ENCODE measurements at regions of chr3 and their contacts with region 1.

Region 1: GRCh38 chr3:187738331-187739093 is 6.8 kb downstream of the BCL6 start:
- DNase-seq: peak; percentile 84
- H3K4me3 ChIP-seq: peak overlapping the region; percentile 32 to 65 (median 63)
- H3K27ac ChIP-seq: peak overlapping the region; percentile 91
- H3K4me1 ChIP-seq: peaks cover 63% of the 10 kb centered on the region
- H3K27me3 ChIP-seq: no peaks in the 10 kb centered on the region
- CTCF ChIP-seq: peak; percentile 67 to 80

Region 2: DNA sequence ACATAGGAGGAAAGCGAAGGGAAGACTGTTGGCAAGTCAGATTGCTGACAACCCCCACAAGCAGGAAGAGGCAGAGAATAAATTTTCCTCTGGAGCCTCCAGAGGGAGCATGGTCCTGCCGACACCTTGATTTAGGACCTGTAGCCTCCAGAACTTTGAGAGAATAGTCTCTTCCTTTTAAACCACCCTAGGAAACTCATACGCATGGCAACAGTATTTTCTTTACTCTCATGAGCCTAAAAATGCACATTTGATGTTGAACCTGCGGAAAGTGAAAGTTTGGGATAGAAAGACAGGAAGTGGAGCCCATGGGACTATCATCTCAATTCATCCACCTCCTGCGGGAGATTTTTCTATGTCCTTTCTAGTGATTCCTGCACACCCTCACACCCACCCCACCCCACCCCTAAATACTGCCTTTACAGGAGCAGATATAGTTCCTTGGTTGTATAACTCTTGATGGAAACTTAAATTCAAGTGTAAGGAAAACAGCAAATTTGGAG is 298.8 kb after region 1 on chr3:
- CTCF ChIA-PET with region 1: no interaction called
- dilution Hi-C with region 1: no loop called
- in situ Hi-C with region 1: loop called in 1 of 2 experiments (anchors 10 kb)
- intact Hi-C with region 1: loop called (anchors 1 kb)
- DNase-seq: peak; percentile 48
- H3K4me3 ChIP-seq: no peak overlapping the region
- H3K27ac ChIP-seq: no peak overlapping the region
- H3K4me1 ChIP-seq: peaks cover 11% of the 10 kb centered on the region
- H3K27me3 ChIP-seq: no peaks in the 10 kb centered on the region
- CTCF ChIP-seq: peak; percentile 40 to 58

Region 3: GRCh38 chr3:188389711-188390342 is 651.3 kb after region 1 on chr3:
- CTCF ChIA-PET with region 1: no interaction called
- dilution Hi-C with region 1: no loop called
- in situ Hi-C with region 1: loop called in 1 of 2 experiments (anchors 25 kb)
- intact Hi-C with region 1: loop called (anchors 2 kb)
- DNase-seq: peak; percentile 74
- H3K4me3 ChIP-seq: peak overlapping the region in 2 of 3 experiments; percentile 6 to 17
- H3K27ac ChIP-seq: peak overlapping the region; percentile 95
- H3K4me1 ChIP-seq: peaks cover 37% of the 10 kb centered on the region
- H3K27me3 ChIP-seq: no peaks in the 10 kb centered on the region
- CTCF ChIP-seq: no peak

Region 4: GRCh38 chr3:188594139-188594538 is 855.6 kb after region 1 on chr3:
- CTCF ChIA-PET with region 1: no interaction called
- dilution Hi-C with region 1: no loop called
- in situ Hi-C with region 1: loop called in 1 of 2 experiments (anchors 25 kb)
- intact Hi-C with region 1: loop called (anchors 5 kb)
- DNase-seq: peak; percentile 72
- H3K4me3 ChIP-seq: no peak overlapping the region
- H3K27ac ChIP-seq: peak overlapping the region; percentile 67
- H3K4me1 ChIP-seq: peaks cover 37% of the 10 kb centered on the region
- H3K27me3 ChIP-seq: no peaks in the 10 kb centered on the region
- CTCF ChIP-seq: no peak

Region 5: GRCh38 chr3:188749010-188749617 is 1010.6 kb after region 1 on chr3:
- CTCF ChIA-PET with region 1: no interaction called
- dilution Hi-C with region 1: no loop called
- in situ Hi-C with region 1: loop called (anchors 10 kb)
- intact Hi-C with region 1: loop called (anchors 1 kb)
- DNase-seq: no peak
- H3K4me3 ChIP-seq: no peak overlapping the region
- H3K27ac ChIP-seq: no peak overlapping the region
- H3K4me1 ChIP-seq: no peaks in the 10 kb centered on the region
- H3K27me3 ChIP-seq: no peaks in the 10 kb centered on the region
- CTCF ChIP-seq: peak; percentile 70 to 83

Region 6: DNA sequence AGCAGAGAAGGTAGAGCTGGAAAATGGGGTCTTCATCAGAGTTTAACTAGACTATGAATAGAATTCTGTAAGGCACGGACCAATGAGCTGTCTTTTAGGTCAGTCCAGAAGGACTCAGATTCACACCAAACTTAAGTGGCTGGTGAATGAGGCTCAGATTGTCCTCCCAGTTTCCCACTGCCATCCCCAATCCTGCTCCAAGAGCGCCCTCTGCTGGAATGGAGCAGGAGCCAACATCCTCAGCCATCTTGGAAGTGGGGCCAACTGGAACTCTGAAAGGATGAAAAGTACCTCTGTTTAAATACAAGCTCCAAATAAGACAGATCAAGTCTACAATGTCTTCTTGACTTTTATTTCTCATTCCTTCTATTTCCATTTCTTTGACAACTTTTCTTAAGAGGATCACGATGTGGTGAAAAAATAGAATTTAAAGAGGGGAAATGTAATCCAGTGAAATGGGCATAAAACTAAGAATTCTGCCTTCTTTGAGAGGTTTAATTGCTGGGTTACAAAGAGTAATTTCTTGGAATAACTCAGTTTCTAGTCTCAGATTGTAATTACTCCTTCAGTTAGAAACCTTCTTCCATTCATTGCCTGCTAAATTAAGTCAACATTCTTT is 1216.2 kb after region 1 on chr3:
- CTCF ChIA-PET with region 1: interaction called, 24 read pairs
- dilution Hi-C with region 1: loop called (anchors 5 kb)
- in situ Hi-C with region 1: loop called (anchors 5 kb)
- intact Hi-C with region 1: loop called (anchors 1 kb)
- DNase-seq: peak; percentile 72
- H3K4me3 ChIP-seq: no peak overlapping the region
- H3K27ac ChIP-seq: no peak overlapping the region
- H3K4me1 ChIP-seq: peaks cover 11% of the 10 kb centered on the region
- H3K27me3 ChIP-seq: no peaks in the 10 kb centered on the region
- CTCF ChIP-seq: peak; percentile 93 to 98

Region 7: DNA sequence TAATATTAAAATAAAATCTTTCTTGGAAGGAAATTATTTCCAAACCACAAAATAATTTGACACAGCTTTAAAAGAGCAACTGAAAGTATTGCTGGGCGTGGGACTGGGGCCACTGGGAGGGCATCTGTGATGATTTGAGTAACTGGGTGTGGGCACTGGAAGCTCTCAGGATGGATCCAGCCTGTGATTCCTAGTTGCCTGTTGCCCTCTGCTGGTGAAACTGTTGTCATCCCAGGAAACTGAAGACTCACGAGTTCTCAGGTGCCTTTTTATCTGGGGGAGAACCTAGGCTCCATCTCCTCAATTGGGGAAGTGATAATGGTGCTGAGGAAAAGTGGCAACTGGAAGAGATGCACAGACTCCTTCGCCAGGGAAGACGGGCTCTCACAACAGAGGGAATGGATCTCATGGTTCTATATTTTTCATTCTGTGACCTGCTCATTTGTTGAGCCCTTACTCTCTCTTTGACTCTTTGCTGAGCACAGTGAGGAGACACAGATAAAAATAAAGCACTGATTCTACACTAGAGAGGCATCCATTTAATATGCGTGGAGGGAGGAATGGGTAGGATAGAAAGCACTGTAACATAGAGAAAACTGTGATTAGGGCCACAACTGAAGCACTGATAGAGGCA is 1494.8 kb after region 1 on chr3:
- CTCF ChIA-PET with region 1: no interaction called
- dilution Hi-C with region 1: no loop called
- in situ Hi-C with region 1: loop called in 1 of 2 experiments (anchors 10 kb)
- intact Hi-C with region 1: loop called (anchors 1 kb)
- DNase-seq: peak; percentile 58
- H3K4me3 ChIP-seq: no peak overlapping the region
- H3K27ac ChIP-seq: no peak overlapping the region
- H3K4me1 ChIP-seq: no peaks in the 10 kb centered on the region
- H3K27me3 ChIP-seq: no peaks in the 10 kb centered on the region
- CTCF ChIP-seq: peak; percentile 80 to 90